MCF 10A (cell line): ENCODE measurements at regions of chr12 and their contacts with region 1.

Region 1: GRCh38 chr12:49740930-49741881 is at the start of gene TMBIM6:
- DNase-seq: peak; percentile 100
- H3K4me3 Mint-ChIP-seq: peak within 1 kb of the TSS; percentile 88
- H3K27ac Mint-ChIP-seq: peak within 1 kb of the TSS; percentile 99
- H3K4me1 Mint-ChIP-seq: peaks cover 10% of the 10 kb centered on the region
- H3K27me3 Mint-ChIP-seq: no peaks in the 10 kb centered on the region
- CTCF ChIP-seq: peak; percentile 79
- total RNA-seq, gene TMBIM6: 517 and 606 TPM in 2 replicates

Region 2: DNA sequence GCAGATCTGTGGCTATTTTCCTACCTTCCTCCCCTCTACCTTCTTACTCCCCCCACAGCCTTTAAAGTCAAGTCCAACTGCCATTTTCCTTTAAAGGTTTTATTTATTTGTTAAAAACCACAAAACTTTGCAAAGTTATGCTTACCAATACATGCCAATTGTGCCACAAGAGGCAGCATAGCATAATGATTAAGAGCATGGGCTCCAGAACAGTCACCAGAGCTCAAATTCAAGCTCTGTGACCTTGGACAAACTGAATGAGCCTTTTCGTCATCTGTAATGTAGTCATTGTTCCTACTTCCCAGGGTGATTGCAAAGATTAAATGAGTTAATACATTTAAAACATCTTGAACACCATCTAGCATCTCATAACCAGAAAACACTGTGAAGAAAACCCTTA is 21.0 kb before region 1 on chr12:
- CTCF ChIA-PET with region 1: interaction called, 13 read pairs
- POLR2A ChIA-PET with region 1: interaction called, 11 read pairs
- intact Hi-C with region 1: no loop called
- DNase-seq: no peak
- H3K4me3 Mint-ChIP-seq: no peak overlapping the region
- H3K27ac Mint-ChIP-seq: no peak overlapping the region
- H3K4me1 Mint-ChIP-seq: peaks cover 5% of the 10 kb centered on the region
- H3K27me3 Mint-ChIP-seq: peaks cover 68% of the 10 kb centered on the region
- CTCF ChIP-seq: no peak

Region 3: DNA sequence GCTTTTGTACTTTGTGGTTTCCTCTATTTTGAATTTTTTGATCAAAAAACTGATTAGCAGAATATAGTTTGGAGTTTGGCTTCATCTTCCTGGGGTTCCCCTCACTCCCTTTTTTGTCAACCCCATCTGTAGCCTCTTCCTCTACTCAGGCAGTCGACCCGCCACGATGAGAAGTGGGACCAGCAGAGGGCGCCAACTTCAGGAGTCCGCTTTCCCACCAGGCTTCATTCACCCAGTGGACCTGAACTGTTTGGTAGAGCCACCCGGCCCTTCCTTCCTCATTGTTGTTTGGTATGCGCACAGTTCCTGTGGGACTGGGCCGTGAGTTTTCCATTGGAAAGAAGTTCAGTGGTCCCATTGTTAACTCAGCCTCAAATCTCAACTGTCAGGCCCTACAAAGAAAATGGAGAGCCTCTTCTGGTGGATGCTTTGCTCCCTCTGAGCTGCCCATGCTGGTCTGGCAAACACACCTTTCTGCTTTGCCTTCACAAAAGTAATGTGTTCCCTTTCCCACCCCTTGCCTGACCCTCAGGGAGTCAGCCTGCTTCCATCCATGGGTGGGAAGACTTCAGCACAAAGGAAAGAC is 21.9 kb after region 1 on chr12:
- CTCF ChIA-PET with region 1: interaction called, 11 read pairs
- POLR2A ChIA-PET with region 1: interaction called, 9 read pairs
- intact Hi-C with region 1: no loop called
- DNase-seq: peak; percentile 57
- H3K4me3 Mint-ChIP-seq: no peak overlapping the region
- H3K27ac Mint-ChIP-seq: peak overlapping the region; percentile 61
- H3K4me1 Mint-ChIP-seq: no peaks in the 10 kb centered on the region
- H3K27me3 Mint-ChIP-seq: no peaks in the 10 kb centered on the region
- CTCF ChIP-seq: peak; percentile 53

Region 4: DNA sequence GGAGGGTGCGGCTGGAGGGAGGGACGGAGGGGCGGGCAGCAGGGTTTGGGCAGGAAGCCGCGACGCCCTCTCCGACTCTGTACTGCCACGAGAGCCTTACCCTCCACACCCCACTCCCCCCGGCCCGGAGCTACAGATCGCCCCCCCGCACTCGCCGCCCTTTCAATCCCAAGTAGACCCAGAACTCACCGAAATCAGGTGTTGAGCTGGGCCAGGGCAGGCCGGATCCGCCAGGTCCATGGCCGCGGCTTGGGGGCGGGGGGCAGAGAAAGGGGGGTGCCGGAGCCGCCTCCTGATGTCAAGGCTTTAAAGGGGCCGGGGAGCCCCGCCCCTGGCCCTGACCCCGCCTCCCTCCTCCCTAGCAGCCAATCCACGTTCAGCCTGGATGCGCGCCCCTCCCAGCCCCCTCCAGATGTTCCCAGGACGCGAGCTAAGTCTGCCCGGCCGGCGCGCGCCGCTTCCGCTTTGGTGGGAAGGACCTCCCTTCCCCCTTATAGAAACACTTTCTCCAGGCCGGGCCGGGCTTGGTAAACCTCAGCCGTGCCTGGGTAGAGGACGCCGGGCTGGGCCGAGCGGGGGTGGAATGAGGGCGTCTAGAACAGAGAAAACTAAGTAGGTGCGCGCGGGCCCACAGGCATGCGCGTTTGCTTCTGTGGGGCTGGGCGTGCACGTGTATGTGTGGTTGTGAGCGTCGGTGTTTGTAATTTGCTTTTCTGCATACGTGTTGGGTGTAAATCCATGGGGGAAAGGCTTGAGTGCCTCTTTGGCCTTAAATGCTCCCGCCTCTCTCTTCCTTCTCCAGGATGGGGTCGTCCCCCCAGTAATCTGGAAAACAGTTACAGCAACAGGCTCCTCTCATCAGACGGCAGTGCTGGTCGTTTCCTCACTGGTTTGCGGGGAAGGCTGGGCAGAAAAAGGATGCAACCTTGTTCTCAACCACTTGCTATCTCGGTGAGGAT is 87.2 kb after region 1 on chr12 and contains the start of gene NCKAP5L:
- CTCF ChIA-PET with region 1: interaction called, 3 read pairs
- POLR2A ChIA-PET with region 1: interaction called, 15 read pairs
- intact Hi-C with region 1: no loop called
- DNase-seq: peak; percentile 96
- H3K4me3 Mint-ChIP-seq: peak within 1 kb of the TSS; percentile 81
- H3K27ac Mint-ChIP-seq: peak within 1 kb of the TSS; percentile 75
- H3K4me1 Mint-ChIP-seq: peaks cover 32% of the 10 kb centered on the region
- H3K27me3 Mint-ChIP-seq: no peaks in the 10 kb centered on the region
- CTCF ChIP-seq: no peak
- total RNA-seq, gene NCKAP5L: 19.9 and 23.1 TPM in 2 replicates